Sigmoid colon (tissue), 7 donors: ENCODE measurements at regions of chr3 and their contacts with region 1.

Region 1: DNA sequence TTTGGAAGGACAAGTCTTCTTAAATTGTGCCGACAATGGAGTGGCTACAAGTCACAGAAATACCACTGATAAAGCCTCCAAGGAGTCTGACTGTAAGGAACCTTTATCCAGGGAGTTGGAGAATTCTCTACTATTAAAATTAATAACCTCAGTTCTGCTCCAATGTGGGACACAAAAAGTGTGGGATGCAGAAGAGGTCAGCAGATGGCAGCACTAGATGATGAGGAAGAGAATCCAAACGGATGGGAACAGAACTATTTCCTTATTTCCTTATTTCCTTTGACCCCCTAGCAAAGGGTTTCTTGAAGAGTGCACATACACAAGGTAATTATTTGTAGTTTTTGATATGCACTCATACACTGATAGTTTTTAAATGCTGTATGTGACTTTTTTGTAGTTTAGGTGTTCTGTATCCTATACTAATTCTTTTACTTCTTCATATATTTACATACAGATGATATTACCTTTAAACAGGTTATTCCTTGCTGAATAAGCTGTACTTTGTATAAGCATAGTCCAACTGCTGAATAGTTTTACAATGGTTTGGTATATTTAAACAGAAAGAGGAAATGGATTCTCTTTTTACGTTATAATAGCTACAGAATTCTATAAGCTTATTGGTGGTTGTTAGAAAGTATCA is 25.6 kb upstream of the NLGN1 start:
- DNase-seq: no peak
- H3K4me3 ChIP-seq: no peak overlapping the region
- H3K27ac ChIP-seq: no peak overlapping the region
- H3K4me1 ChIP-seq: no peaks in the 10 kb centered on the region
- H3K27me3 ChIP-seq: no peaks in the 10 kb centered on the region
- CTCF ChIP-seq: peak; percentile 34 to 62 (median 44)
- EP300 ChIP-seq: no peak
- POLR2A ChIP-seq: no peak

Region 2: GRCh38 chr3:173465113-173465512 is 93.1 kb after region 1 on chr3:
- intact Hi-C with region 1: no loop called
- DNase-seq: no peak
- H3K4me3 ChIP-seq: no peak overlapping the region
- H3K27ac ChIP-seq: no peak overlapping the region
- H3K4me1 ChIP-seq: no peaks in the 10 kb centered on the region
- H3K27me3 ChIP-seq: no peaks in the 10 kb centered on the region
- CTCF ChIP-seq: no peak
- EP300 ChIP-seq: no peak
- POLR2A ChIP-seq: no peak

Region 3: GRCh38 chr3:173553635-173554280 is 181.8 kb after region 1 on chr3:
- intact Hi-C with region 1: loop called (anchors 1 kb)
- DNase-seq: no peak
- H3K4me3 ChIP-seq: no peak overlapping the region
- H3K27ac ChIP-seq: no peak overlapping the region
- H3K4me1 ChIP-seq: peaks cover 0 to 13% (median 3%) of the 10 kb centered on the region in 4 donors
- H3K27me3 ChIP-seq: no peaks in the 10 kb centered on the region
- CTCF ChIP-seq: peak in 3 of 4 experiments; percentile 38 to 74 (median 70)
- EP300 ChIP-seq: no peak
- POLR2A ChIP-seq: no peak

Region 4: GRCh38 chr3:173785004-173785403 is 413.0 kb after region 1 on chr3:
- intact Hi-C with region 1: no loop called
- DNase-seq: no peak
- H3K4me3 ChIP-seq: no peak overlapping the region
- H3K27ac ChIP-seq: no peak overlapping the region
- H3K4me1 ChIP-seq: no peaks in the 10 kb centered on the region
- H3K27me3 ChIP-seq: no peaks in the 10 kb centered on the region
- CTCF ChIP-seq: no peak
- EP300 ChIP-seq: no peak
- POLR2A ChIP-seq: no peak